ENCODE measurements at regions of chr10 and their contacts with region 1.

Region 1: DNA sequence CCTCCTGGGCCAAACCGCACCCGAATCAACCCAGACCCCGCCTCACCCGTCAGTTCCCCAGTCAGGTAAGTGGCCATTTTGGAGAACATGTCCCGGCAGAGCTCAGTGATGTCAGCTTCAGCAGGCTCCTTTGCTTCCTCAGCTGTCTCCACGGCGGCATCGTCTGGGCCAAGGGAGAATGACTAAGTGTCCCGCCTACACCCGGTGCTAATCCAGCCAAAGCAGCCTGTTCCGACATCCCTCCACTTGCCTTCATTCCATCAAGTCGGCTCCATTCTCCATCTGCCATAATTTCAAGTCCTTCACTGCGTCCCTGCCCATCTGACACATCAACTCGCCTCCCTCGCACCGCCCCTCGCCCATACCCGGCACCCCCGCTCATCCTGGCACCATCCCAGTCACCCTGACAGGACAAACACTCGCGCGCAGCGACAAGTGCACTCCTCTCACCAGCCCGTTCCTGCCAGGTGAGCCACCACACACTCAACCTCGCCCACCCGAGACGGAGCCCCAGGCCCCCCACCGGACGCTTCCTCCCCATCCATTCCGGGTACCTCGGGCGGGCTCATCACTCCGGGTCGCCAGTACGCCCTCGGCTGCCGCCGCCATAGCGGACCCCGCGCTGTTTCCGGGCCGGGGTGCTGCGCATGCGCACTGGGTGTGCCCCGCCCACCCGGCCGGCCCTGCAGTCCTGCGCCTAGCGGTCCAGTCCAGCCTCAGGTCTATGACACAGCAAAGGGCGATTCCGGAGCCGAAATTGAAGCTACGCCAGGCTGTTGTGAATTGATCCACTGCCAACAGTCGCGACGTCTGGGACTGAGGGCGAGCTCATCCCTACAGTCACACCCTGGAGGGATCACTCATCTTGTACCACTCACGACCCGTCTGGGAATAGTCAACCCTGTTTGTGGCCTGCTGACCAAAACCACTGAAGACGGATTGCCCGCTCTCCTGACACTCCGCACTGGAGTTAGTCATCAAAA is at the start of gene BLOC1S2:
- DNase-seq: peak; percentile 87
- H3K4me3 Mint-ChIP-seq: peak within 1 kb of the TSS; percentile 99
- H3K27ac Mint-ChIP-seq: peak within 1 kb of the TSS; percentile 98
- H3K4me1 Mint-ChIP-seq: peaks cover 25% of the 10 kb centered on the region
- H3K27me3 Mint-ChIP-seq: no peaks in the 10 kb centered on the region
- total RNA-seq, gene BLOC1S2: 68.5 to 69.1 TPM

Region 2: DNA sequence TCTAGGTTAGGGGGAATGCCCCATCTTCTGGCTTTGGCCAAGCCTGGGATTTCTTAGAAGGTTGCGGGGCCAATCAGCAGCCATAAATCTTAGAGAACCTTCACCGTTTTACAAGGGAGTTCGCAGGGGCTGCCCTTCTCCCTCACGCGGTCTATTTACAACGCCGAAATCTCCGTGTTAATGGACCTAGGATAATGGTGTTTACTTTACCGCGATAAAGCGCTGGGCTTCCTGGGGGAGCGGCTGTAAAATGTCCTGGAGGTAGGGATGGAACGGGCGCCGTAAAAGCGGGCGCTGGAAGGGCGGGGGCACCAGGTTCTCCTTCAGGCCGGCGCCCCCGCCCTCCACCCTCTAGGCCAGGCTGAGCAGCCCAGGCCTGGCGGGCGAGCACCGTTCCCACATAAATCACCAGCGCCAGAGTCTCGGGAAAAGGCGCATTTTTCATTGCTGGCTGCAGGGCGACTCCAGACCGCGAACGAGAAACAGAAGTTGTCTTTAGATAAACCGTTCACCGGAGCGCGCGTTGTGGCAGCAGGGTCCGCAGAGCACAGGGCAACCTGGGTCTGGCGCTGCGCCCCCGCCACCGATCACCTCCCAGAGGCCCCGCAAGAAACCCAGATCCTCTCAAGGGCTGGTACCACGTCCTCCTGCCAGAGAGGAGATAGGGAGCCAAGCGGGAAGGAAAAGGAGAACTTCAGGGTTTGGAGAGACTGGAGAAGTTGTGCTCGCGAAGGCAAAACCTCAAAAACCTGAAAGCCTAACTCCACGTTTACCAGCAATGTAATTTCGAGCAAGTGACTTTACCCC is 766.1 kb before region 1 on chr10:
- CTCF ChIA-PET with region 1: no interaction called
- intact Hi-C with region 1: no loop called
- DNase-seq: no peak
- H3K4me3 Mint-ChIP-seq: no peak overlapping the region
- H3K27ac Mint-ChIP-seq: no peak overlapping the region
- H3K4me1 Mint-ChIP-seq: peaks cover 5% of the 10 kb centered on the region
- H3K27me3 Mint-ChIP-seq: peaks cover 61% of the 10 kb centered on the region

Region 3: GRCh38 chr10:99895867-99896266 is 390.5 kb before region 1 on chr10:
- CTCF ChIA-PET with region 1: no interaction called
- intact Hi-C with region 1: no loop called
- DNase-seq: no peak
- H3K4me3 Mint-ChIP-seq: no peak overlapping the region
- H3K27ac Mint-ChIP-seq: no peak overlapping the region
- H3K4me1 Mint-ChIP-seq: no peaks in the 10 kb centered on the region
- H3K27me3 Mint-ChIP-seq: no peaks in the 10 kb centered on the region

Region 4: DNA sequence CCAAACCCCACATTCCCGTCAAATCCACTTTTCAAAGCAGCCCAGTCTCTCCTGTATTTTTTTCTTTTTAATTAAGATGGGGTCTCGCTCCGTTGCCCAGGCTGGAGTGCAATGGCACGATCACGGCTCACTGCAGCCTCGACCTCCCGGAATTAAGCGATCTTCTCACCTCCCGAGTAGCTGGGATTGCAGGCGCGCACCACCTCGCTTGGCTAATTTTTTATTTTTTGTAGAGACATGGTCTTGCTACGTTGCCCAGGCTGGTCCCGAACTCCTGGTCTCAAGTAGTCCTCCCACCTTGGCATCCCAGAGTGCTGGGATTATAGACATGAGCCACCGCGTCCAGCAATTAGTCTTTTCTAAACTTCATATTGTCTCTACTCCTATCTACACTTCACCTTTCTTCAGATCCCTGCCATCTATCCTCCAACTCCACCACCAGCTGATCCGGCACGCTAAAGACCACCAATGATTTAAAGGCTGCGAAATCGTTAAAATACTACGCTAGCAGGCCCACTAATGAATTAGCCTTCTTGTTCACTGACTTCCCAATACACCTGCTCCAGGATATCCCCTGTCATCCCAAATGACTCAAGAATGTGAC is 56.4 kb before region 1 on chr10:
- CTCF ChIA-PET with region 1: no interaction called
- intact Hi-C with region 1: loop called (anchors 2 kb)
- DNase-seq: no peak
- H3K4me3 Mint-ChIP-seq: peak overlapping the region; percentile 91
- H3K27ac Mint-ChIP-seq: peak overlapping the region; percentile 90
- H3K4me1 Mint-ChIP-seq: peaks cover 31% of the 10 kb centered on the region
- H3K27me3 Mint-ChIP-seq: no peaks in the 10 kb centered on the region

Region 5: GRCh38 chr10:100267237-100268104 is 18.9 kb before region 1 on chr10 and contains the start of gene CWF19L1:
- CTCF ChIA-PET with region 1: interaction called, 4 read pairs
- intact Hi-C with region 1: loop called (anchors 1 kb)
- DNase-seq: peak; percentile 90
- H3K4me3 Mint-ChIP-seq: peak within 1 kb of the TSS; percentile 100
- H3K27ac Mint-ChIP-seq: peak within 1 kb of the TSS; percentile 97
- H3K4me1 Mint-ChIP-seq: peaks cover 29% of the 10 kb centered on the region
- H3K27me3 Mint-ChIP-seq: no peaks in the 10 kb centered on the region
- total RNA-seq, gene CWF19L1: 35.3 to 35.4 TPM

Region 6: DNA sequence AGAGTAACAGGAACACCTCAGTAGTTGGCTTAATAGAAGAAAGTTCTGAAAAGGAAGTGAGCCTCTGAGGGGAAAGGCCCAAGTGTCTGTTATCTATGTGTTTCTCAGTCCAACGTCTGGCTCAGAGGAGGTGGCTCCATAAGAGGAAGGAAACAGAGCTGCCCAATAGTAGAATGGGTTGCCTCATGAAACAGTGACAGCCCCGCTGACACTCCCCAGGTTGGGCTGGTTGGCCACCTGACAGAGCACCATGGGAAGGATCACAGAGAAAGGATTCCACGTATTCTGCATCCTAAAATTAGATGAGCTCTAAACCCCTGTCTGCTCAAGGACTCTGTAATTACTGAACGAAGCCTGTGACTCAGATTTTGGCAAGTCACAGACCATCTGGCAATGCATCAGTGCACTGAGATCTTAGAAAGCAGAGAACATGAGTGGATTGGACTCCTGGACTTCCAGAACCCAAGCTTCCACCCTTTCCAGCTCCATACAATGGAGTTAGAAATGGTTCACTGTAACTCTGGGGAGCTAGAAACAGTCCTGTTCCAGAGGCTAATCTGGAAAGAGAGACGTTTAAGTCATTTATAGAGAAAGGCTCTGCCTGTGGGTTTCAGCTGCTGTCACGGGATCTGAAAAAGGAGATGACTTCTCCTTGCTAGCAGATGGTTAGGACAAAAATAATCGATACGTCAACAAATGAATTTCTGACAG is 40.8 kb after region 1 on chr10:
- CTCF ChIA-PET with region 1: no interaction called
- intact Hi-C with region 1: loop called (anchors 1 kb)
- DNase-seq: peak; percentile 82
- H3K4me3 Mint-ChIP-seq: peak overlapping the region; percentile 5
- H3K27ac Mint-ChIP-seq: peak overlapping the region; percentile 80
- H3K4me1 Mint-ChIP-seq: peaks cover 16% of the 10 kb centered on the region
- H3K27me3 Mint-ChIP-seq: peaks cover 4% of the 10 kb centered on the region

Region 7: DNA sequence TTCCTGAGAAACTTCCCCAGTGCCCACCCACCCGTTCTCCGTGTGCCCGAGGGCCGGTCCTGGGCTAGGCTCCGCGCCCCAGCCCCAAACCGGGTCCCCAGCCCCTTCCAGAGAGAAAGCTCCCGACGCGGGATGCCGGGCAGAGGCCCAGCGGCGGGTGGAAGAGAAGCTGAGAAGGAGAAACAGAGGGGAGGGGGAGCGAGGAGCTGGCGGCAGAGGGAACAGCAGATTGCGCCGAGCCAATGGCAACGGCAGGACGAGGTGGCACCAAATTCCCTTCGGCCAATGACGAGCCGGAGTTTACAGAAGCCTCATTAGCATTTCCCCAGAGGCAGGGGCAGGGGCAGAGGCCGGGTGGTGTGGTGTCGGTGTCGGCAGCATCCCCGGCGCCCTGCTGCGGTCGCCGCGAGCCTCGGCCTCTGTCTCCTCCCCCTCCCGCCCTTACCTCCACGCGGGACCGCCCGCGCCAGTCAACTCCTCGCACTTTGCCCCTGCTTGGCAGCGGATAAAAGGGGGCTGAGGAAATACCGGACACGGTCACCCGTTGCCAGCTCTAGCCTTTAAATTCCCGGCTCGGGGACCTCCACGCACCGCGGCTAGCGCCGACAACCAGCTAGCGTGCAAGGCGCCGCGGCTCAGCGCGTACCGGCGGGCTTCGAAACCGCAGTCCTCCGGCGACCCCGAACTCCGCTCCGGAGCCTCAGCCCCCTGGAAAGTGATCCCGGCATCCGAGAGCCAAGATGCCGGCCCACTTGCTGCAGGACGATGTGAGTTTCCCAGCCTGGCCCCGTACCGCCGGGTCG is 60.6 kb after region 1 on chr10 and contains the start of gene SCD:
- CTCF ChIA-PET with region 1: no interaction called
- intact Hi-C with region 1: loop called (anchors 1 kb)
- DNase-seq: peak; percentile 95
- H3K4me3 Mint-ChIP-seq: peak within 1 kb of the TSS; percentile 97
- H3K27ac Mint-ChIP-seq: peak within 1 kb of the TSS; percentile 87
- H3K4me1 Mint-ChIP-seq: peaks cover 45% of the 10 kb centered on the region
- H3K27me3 Mint-ChIP-seq: no peaks in the 10 kb centered on the region
- total RNA-seq, gene SCD: 161 to 169 TPM

Region 8: GRCh38 chr10:100912605-100913469 is 626.5 kb after region 1 on chr10 and contains the start of gene SLF2:
- CTCF ChIA-PET with region 1: no interaction called
- intact Hi-C with region 1: loop called (anchors 2 kb)
- DNase-seq: peak; percentile 98
- H3K4me3 Mint-ChIP-seq: peak within 1 kb of the TSS; percentile 98
- H3K27ac Mint-ChIP-seq: peak within 1 kb of the TSS; percentile 99
- H3K4me1 Mint-ChIP-seq: peaks cover 42% of the 10 kb centered on the region
- H3K27me3 Mint-ChIP-seq: no peaks in the 10 kb centered on the region
- total RNA-seq, gene SLF2: 29.3 to 30.3 TPM